Caco-2 (cell line): ENCODE measurements at regions of chr17 and their contacts with region 1.

Region 1: GRCh38 chr17:20278805-20279204 is 188.5 kb downstream of the LGALS9B start:
- DNase-seq: no peak
- H3K4me3 ChIP-seq: no peak overlapping the region
- H3K4me3 Mint-ChIP-seq: no peak overlapping the region
- H3K27ac Mint-ChIP-seq: no peak overlapping the region
- H3K4me1 ChIP-seq: no peaks in the 10 kb centered on the region
- H3K4me1 Mint-ChIP-seq: no peaks in the 10 kb centered on the region
- H3K27me3 ChIP-seq: no peaks in the 10 kb centered on the region
- H3K27me3 Mint-ChIP-seq: no peaks in the 10 kb centered on the region
- CTCF ChIP-seq: no peak

Region 2: GRCh38 chr17:20216154-20216815 is 62.5 kb before region 1 on chr17:
- CTCF ChIA-PET with region 1: no interaction called
- POLR2A ChIA-PET with region 1: no interaction called
- intact Hi-C with region 1: no loop called
- DNase-seq: no peak
- H3K4me3 ChIP-seq: no peak overlapping the region
- H3K4me3 Mint-ChIP-seq: no peak overlapping the region
- H3K27ac Mint-ChIP-seq: no peak overlapping the region
- H3K4me1 ChIP-seq: peaks cover 10% of the 10 kb centered on the region; the same call in 1 of the 2 replicates
- H3K4me1 Mint-ChIP-seq: peaks cover 16% of the 10 kb centered on the region
- H3K27me3 ChIP-seq: no peaks in the 10 kb centered on the region
- H3K27me3 Mint-ChIP-seq: no peaks in the 10 kb centered on the region
- CTCF ChIP-seq: no peak

Region 3: GRCh38 chr17:20226814-20227482 is 51.9 kb before region 1 on chr17:
- CTCF ChIA-PET with region 1: interaction called, 4 read pairs
- POLR2A ChIA-PET with region 1: no interaction called
- intact Hi-C with region 1: loop called (anchors 5 kb)
- DNase-seq: peak; percentile 74 to 83
- H3K4me3 ChIP-seq: no peak overlapping the region
- H3K4me3 Mint-ChIP-seq: no peak overlapping the region
- H3K27ac Mint-ChIP-seq: peak overlapping the region; percentile 50
- H3K4me1 ChIP-seq: peaks cover 25% of the 10 kb centered on the region
- H3K4me1 Mint-ChIP-seq: peaks cover 29% of the 10 kb centered on the region
- H3K27me3 ChIP-seq: no peaks in the 10 kb centered on the region
- H3K27me3 Mint-ChIP-seq: no peaks in the 10 kb centered on the region
- CTCF ChIP-seq: peak; percentile 83 to 89

Region 4: GRCh38 chr17:20300436-20300934 is 21.7 kb after region 1 on chr17:
- CTCF ChIA-PET with region 1: no interaction called
- POLR2A ChIA-PET with region 1: no interaction called
- intact Hi-C with region 1: no loop called
- DNase-seq: no peak
- H3K4me3 ChIP-seq: no peak overlapping the region
- H3K4me3 Mint-ChIP-seq: no peak overlapping the region
- H3K27ac Mint-ChIP-seq: no peak overlapping the region
- H3K4me1 ChIP-seq: no peaks in the 10 kb centered on the region
- H3K4me1 Mint-ChIP-seq: no peaks in the 10 kb centered on the region
- H3K27me3 ChIP-seq: no peaks in the 10 kb centered on the region
- H3K27me3 Mint-ChIP-seq: no peaks in the 10 kb centered on the region
- CTCF ChIP-seq: no peak